ENCODE measurements at regions of chr13 and their contacts with region 1.

Region 1: DNA sequence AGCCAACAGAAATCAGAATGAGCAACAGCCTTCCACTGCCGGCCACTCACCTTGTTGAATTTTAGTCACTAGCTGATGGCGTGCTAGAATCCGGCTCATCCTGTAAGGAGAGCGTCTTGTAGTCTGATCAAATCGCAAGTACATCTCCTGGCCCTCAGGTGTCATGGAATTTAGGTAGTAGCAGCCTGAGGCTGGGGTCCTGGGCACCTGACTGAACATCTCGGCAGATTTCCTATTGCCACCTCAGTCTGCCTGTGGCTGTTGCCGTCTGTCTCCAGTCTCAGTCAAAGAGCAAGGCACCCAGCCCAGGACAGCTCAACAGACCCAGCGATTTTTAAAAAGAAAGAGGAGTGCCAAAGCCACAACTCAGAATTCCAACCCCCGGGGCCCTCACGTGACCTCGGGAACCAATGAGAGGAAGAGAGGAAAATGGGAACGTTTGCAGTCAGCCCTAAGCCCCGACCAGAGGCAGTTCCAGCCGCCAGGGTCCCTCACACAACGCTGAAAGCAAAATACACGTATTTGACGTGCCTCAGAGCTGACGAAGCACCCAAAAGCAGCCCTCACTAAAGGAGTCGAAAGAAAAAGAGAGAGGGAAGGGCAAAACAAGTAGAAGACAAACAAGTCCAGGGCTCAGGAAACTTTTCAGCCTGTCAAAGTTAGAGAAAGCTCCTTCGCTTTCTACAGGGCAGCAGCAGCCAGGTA is at the start of gene STARD13:
- DNase-seq: peak; percentile 91 to 93
- ATAC-seq: peak; percentile 93 to 95 (median 95)
- H3K4me3 ChIP-seq: peak within 1 kb of the TSS; percentile 67
- H3K27ac ChIP-seq: peak within 1 kb of the TSS; percentile 88
- H3K4me1 ChIP-seq: peaks cover 31% of the 10 kb centered on the region
- H3K27me3 ChIP-seq: no peaks in the 10 kb centered on the region
- CTCF ChIP-seq: peak; percentile 33
- total RNA-seq, gene STARD13: 5.2 to 9.2 (median 7.1) TPM

Region 2: GRCh38 chr13:33125821-33126570 is 159.6 kb before region 1 on chr13:
- intact Hi-C with region 1: loop called in 1 of 2 experiments (anchors 10 kb)
- DNase-seq: peak; percentile 60 to 80
- ATAC-seq: peak; percentile 91 to 96 (median 94)
- H3K4me3 ChIP-seq: peak overlapping the region; percentile 31
- H3K27ac ChIP-seq: peak overlapping the region; percentile 83
- H3K4me1 ChIP-seq: peaks cover 33% of the 10 kb centered on the region
- H3K27me3 ChIP-seq: no peaks in the 10 kb centered on the region
- CTCF ChIP-seq: no peak

Region 3: GRCh38 chr13:33349986-33350826 is 64.6 kb after region 1 on chr13:
- intact Hi-C with region 1: loop called in 1 of 2 experiments (anchors 5 kb)
- DNase-seq: peak; percentile 61 to 72
- ATAC-seq: peak; percentile 53 to 66 (median 64)
- H3K4me3 ChIP-seq: peak overlapping the region; percentile 84
- H3K27ac ChIP-seq: peak overlapping the region; percentile 70
- H3K4me1 ChIP-seq: peaks cover 19% of the 10 kb centered on the region
- H3K27me3 ChIP-seq: no peaks in the 10 kb centered on the region
- CTCF ChIP-seq: no peak